ENCODE measurements at regions of chr17 and their contacts with region 1.

Region 1: GRCh38 chr17:59331129-59331928 is at the start of gene YPEL2:
- DNase-seq: peak; percentile 93
- ATAC-seq: peak; percentile 92
- H3K4me3 ChIP-seq: peak within 1 kb of the TSS; percentile 45 to 93 (median 90)
- H3K4me3 Mint-ChIP-seq: peak within 1 kb of the TSS; percentile 97
- H3K27ac ChIP-seq: peak within 1 kb of the TSS; percentile 42 to 76
- H3K27ac Mint-ChIP-seq: peak within 1 kb of the TSS; percentile 89
- H3K4me1 ChIP-seq: peaks cover 33 to 45% of the 10 kb centered on the region in 2 donors
- H3K4me1 Mint-ChIP-seq: peaks cover 69% of the 10 kb centered on the region
- H3K27me3 ChIP-seq: no peaks in the 10 kb centered on the region
- H3K27me3 Mint-ChIP-seq: no peaks in the 10 kb centered on the region
- CTCF ChIP-seq: no peak
- total RNA-seq, gene YPEL2: 51.8 and 53.9 TPM in 2 replicates

Region 2: GRCh38 chr17:59355696-59356325 is 24.5 kb after region 1 on chr17:
- CTCF ChIA-PET with region 1: interaction called, 11 read pairs
- POLR2A ChIA-PET with region 1: no interaction called
- intact Hi-C with region 1: loop called (anchors 2 kb)
- DNase-seq: no peak
- ATAC-seq: no peak
- H3K4me3 ChIP-seq: no peak overlapping the region
- H3K4me3 Mint-ChIP-seq: no peak overlapping the region
- H3K27ac ChIP-seq: peak overlapping the region in 1 of 2 donors; percentile 16
- H3K27ac Mint-ChIP-seq: peak overlapping the region; percentile 33
- H3K4me1 ChIP-seq: peaks cover 40 to 48% of the 10 kb centered on the region in 2 donors
- H3K4me1 Mint-ChIP-seq: peaks cover 73% of the 10 kb centered on the region
- H3K27me3 ChIP-seq: no peaks in the 10 kb centered on the region
- H3K27me3 Mint-ChIP-seq: no peaks in the 10 kb centered on the region
- CTCF ChIP-seq: no peak

Region 3: GRCh38 chr17:59387351-59388068 is 56.2 kb after region 1 on chr17:
- CTCF ChIA-PET with region 1: interaction called, 13 read pairs
- POLR2A ChIA-PET with region 1: no interaction called
- intact Hi-C with region 1: no loop called
- DNase-seq: no peak
- ATAC-seq: no peak
- H3K4me3 ChIP-seq: no peak overlapping the region
- H3K4me3 Mint-ChIP-seq: no peak overlapping the region
- H3K27ac ChIP-seq: no peak overlapping the region
- H3K27ac Mint-ChIP-seq: no peak overlapping the region
- H3K4me1 ChIP-seq: no peaks in the 10 kb centered on the region
- H3K4me1 Mint-ChIP-seq: no peaks in the 10 kb centered on the region
- H3K27me3 ChIP-seq: no peaks in the 10 kb centered on the region
- H3K27me3 Mint-ChIP-seq: no peaks in the 10 kb centered on the region
- CTCF ChIP-seq: no peak

Region 4: GRCh38 chr17:59415397-59415796 is 84.1 kb after region 1 on chr17:
- CTCF ChIA-PET with region 1: interaction called, 12 read pairs
- POLR2A ChIA-PET with region 1: no interaction called
- intact Hi-C with region 1: no loop called
- DNase-seq: no peak
- ATAC-seq: no peak
- H3K4me3 ChIP-seq: no peak overlapping the region
- H3K4me3 Mint-ChIP-seq: no peak overlapping the region
- H3K27ac ChIP-seq: no peak overlapping the region
- H3K27ac Mint-ChIP-seq: no peak overlapping the region
- H3K4me1 ChIP-seq: peaks cover 8% of the 10 kb centered on the region in 2 donors
- H3K4me1 Mint-ChIP-seq: peaks cover 12% of the 10 kb centered on the region
- H3K27me3 ChIP-seq: no peaks in the 10 kb centered on the region
- H3K27me3 Mint-ChIP-seq: peaks cover 3% of the 10 kb centered on the region
- CTCF ChIP-seq: no peak

Region 5: GRCh38 chr17:59440784-59441441 is 109.6 kb after region 1 on chr17:
- CTCF ChIA-PET with region 1: interaction called, 358 read pairs
- POLR2A ChIA-PET with region 1: interaction called, 9 read pairs
- intact Hi-C with region 1: loop called (anchors 1 kb)
- DNase-seq: peak; percentile 89
- ATAC-seq: peak; percentile 86
- H3K4me3 ChIP-seq: no peak overlapping the region
- H3K4me3 Mint-ChIP-seq: no peak overlapping the region
- H3K27ac ChIP-seq: no peak overlapping the region
- H3K27ac Mint-ChIP-seq: no peak overlapping the region
- H3K4me1 ChIP-seq: peaks cover 42 to 43% of the 10 kb centered on the region in 2 donors
- H3K4me1 Mint-ChIP-seq: peaks cover 37% of the 10 kb centered on the region
- H3K27me3 ChIP-seq: no peaks in the 10 kb centered on the region
- H3K27me3 Mint-ChIP-seq: no peaks in the 10 kb centered on the region
- CTCF ChIP-seq: peak; percentile 84

Region 6: DNA sequence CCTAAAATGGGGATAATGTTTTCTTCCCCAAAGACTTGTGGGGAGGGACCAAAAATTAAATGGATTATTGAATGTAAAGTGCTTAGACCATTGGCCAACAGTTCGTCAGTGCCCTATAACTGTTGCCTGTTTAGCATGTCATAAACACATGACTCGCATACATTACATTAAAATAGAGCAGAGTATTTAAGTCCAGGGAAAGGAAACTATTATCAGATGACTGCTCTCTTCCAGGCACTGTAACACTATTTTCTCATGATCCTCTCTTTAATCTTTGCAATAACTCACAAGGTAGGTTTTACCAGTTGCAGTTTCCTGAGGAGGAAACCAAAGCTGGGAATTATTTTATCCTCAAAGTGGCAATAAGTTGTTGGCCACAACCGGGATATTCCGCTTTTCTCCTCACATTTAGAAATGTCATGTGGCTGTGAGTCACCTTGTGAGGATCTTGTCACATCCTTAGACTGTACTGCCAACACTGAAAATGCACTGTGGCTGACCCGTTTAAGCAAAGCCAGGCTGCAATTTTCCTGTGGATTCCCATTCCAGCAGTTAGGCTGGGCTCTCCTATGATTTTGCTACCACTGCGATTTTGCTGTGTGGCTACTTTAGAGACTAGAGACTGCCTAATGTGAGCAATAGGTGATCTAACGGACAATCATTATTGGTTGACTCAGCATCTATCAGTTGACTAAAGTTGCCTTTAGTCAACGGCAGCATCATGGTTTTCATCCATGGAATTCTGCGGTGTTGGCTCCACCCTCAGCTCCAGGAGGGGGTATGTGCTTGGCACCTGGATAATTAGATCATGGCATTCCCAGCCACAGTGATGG is 175.8 kb after region 1 on chr17:
- CTCF ChIA-PET with region 1: no interaction called
- POLR2A ChIA-PET with region 1: no interaction called
- intact Hi-C with region 1: no loop called
- DNase-seq: no peak
- ATAC-seq: no peak
- H3K4me3 ChIP-seq: no peak overlapping the region
- H3K4me3 Mint-ChIP-seq: no peak overlapping the region
- H3K27ac ChIP-seq: no peak overlapping the region
- H3K27ac Mint-ChIP-seq: no peak overlapping the region
- H3K4me1 ChIP-seq: no peaks in the 10 kb centered on the region
- H3K4me1 Mint-ChIP-seq: no peaks in the 10 kb centered on the region
- H3K27me3 ChIP-seq: peaks cover 0 to 4% (median 2%) of the 10 kb centered on the region in 4 experiments
- H3K27me3 Mint-ChIP-seq: peaks cover 20% of the 10 kb centered on the region
- CTCF ChIP-seq: no peak

Measured in B cell (primary cell).